ENCODE measurements at regions of chr2 and their contacts with region 1.

Region 1: DNA sequence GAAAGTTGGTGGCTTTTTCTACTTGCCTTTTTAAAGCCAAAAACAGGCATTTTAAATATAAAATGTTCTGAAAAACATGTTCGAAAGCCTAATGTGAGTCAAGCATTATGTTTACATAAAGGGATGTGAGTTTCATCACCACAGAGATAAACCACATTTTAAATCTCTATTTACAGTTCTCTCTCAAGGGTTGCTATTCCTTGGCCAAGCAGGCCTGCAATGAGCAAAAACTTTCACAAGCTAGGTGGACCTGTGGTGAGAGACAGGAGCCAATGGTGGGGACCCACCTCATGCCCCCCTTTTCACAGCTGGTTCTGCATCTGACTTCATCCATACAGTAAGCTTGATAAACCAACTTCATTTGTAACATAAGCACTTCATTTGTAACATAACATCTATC is 65.1 kb downstream of the CUL3 start:
- DNase-seq: peak in 7 of 9 experiments; percentile 4 to 53 (median 29)
- ATAC-seq: peak; percentile 62
- H3K4me3 ChIP-seq: no peak overlapping the region
- H3K4me3 Mint-ChIP-seq: peak overlapping the region; percentile 13
- H3K27ac ChIP-seq: no peak overlapping the region
- H3K27ac Mint-ChIP-seq: peak overlapping the region; percentile 55
- H3K4me1 ChIP-seq: peaks cover 42% of the 10 kb centered on the region
- H3K4me1 Mint-ChIP-seq: peaks cover 69% of the 10 kb centered on the region
- H3K27me3 ChIP-seq: no peaks in the 10 kb centered on the region
- H3K27me3 Mint-ChIP-seq: no peaks in the 10 kb centered on the region
- CTCF ChIP-seq: no peak

Region 2: GRCh38 chr2:224507789-224508188 is 12.3 kb before region 1 on chr2:
- CTCF ChIA-PET with region 1: interaction called, 3 read pairs
- POLR2A ChIA-PET with region 1: interaction called, 3 read pairs
- intact Hi-C with region 1: loop called in 1 of 2 experiments (anchors 2 kb)
- DNase-seq: no peak
- ATAC-seq: no peak
- H3K4me3 ChIP-seq: no peak overlapping the region
- H3K4me3 Mint-ChIP-seq: no peak overlapping the region
- H3K27ac ChIP-seq: no peak overlapping the region
- H3K27ac Mint-ChIP-seq: no peak overlapping the region
- H3K4me1 ChIP-seq: no peaks in the 10 kb centered on the region
- H3K4me1 Mint-ChIP-seq: peaks cover 12% of the 10 kb centered on the region
- H3K27me3 ChIP-seq: no peaks in the 10 kb centered on the region
- H3K27me3 Mint-ChIP-seq: no peaks in the 10 kb centered on the region
- CTCF ChIP-seq: no peak

Region 3: DNA sequence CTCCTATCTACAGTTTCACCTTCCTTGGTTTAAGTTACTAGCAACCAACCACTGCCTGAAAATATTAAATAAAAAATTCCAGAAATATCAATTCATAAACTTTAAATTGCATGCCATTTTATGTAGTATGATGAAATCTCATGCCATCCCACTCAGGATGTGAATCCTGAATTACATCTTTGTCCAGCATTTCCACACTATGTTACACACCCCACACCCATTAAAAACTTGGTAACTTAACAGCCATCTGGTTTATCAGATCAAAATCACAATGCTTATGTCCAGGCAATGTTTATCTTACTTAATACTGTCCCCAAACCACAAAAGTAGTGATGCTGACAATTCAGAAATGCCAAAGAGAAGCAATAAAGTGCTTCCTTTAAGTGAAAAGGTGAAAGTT is 43.5 kb after region 1 on chr2:
- CTCF ChIA-PET with region 1: no interaction called
- POLR2A ChIA-PET with region 1: no interaction called
- intact Hi-C with region 1: no loop called
- DNase-seq: no peak
- ATAC-seq: no peak
- H3K4me3 ChIP-seq: no peak overlapping the region
- H3K4me3 Mint-ChIP-seq: no peak overlapping the region
- H3K27ac ChIP-seq: no peak overlapping the region
- H3K27ac Mint-ChIP-seq: no peak overlapping the region
- H3K4me1 ChIP-seq: peaks cover 58% of the 10 kb centered on the region
- H3K4me1 Mint-ChIP-seq: peaks cover 58% of the 10 kb centered on the region
- H3K27me3 ChIP-seq: no peaks in the 10 kb centered on the region
- H3K27me3 Mint-ChIP-seq: no peaks in the 10 kb centered on the region
- CTCF ChIP-seq: no peak

Region 4: GRCh38 chr2:224807153-224807964 is 287.3 kb after region 1 on chr2:
- CTCF ChIA-PET with region 1: no interaction called
- POLR2A ChIA-PET with region 1: no interaction called
- intact Hi-C with region 1: no loop called
- DNase-seq: peak in 1 of 9 experiments; percentile 8
- ATAC-seq: no peak
- H3K4me3 ChIP-seq: no peak overlapping the region
- H3K4me3 Mint-ChIP-seq: no peak overlapping the region
- H3K27ac ChIP-seq: no peak overlapping the region
- H3K27ac Mint-ChIP-seq: no peak overlapping the region
- H3K4me1 ChIP-seq: no peaks in the 10 kb centered on the region
- H3K4me1 Mint-ChIP-seq: no peaks in the 10 kb centered on the region
- H3K27me3 ChIP-seq: no peaks in the 10 kb centered on the region
- H3K27me3 Mint-ChIP-seq: no peaks in the 10 kb centered on the region
- CTCF ChIP-seq: no peak